ENCODE measurements at regions of chr2 and their contacts with region 1.

Region 1: DNA sequence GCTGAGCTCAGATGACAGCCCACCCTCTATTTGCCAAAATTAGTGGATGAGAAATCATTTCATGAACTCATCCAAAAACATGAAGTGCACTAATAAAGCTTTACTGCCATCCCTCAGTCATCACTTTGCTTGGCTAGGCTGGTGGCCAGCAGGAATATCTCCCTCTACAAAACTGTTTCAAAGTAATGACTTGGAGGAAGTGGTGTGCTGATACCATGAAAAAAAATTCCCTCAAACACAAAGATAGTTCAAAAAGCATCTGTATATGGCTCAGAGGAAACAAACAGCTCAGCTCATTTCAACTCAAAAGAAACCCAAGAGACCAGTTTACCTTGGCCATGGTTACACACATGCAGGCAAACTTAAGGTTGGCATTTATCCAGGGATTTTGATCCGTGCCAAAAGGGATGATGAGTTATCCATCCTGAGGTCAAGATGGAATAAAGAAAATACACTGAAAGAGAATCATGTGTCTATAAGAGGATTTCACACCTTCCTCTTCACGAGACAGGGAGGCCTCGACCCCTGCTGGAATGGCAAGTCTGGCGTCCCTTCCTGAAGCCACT is 18.4 kb upstream of the WIPF1 start:
- DNase-seq: no peak

Region 2: DNA sequence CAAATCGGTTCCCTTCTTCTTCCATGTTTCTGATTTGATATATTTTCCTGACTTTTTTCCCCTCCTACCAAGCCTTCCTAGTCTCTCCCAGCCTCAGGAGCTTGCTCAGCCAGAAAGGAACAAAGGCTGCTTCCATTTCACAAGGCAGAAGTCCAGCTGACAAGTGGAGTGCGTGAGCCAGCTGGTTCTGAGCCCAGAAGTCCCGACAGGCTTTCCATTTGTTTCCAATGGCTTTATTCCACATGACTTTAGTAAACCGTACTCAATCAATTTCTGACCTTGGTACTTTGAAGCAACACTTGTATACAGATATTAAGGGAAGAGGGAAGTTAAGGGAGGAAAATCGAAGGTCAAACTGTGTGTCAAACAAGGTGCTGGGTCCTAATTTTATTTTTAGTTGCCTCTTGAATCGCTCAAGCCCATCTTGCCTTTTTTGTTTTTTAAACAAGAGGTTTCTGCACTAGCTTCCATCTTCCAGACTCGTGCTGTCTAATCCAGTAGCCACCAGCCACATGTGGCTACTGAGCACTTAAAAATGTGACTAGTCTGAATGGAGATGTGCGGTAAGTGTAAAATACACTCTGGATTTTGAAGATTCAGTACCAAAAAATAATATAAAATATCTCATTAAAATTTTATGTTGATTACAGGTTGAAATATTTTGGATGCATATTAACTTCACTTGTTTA is 54.5 kb before region 1 on chr2:
- intact Hi-C with region 1: no loop called
- DNase-seq: peak; percentile 88

Region 3: DNA sequence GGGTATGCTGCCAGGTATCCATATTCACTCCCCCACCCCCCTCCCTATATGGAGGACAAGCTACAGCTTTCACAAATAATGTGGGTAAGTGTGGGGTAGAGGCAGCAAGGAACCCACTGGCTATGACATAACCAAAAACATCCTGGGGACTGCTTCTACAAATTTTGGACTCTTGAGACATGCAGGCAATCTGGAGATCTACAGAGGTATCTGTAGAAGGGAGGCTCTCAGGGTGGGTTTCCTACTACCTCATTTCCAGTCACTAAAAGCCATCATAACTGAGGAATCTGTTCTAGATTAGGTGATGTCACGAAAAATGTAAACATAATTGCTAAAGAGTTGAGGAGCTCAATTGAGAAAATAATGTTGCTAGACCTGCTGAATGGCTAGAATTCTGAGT is 28.4 kb after region 1 on chr2:
- intact Hi-C with region 1: no loop called
- DNase-seq: no peak

Region 4: GRCh38 chr2:174682578-174683391 is 66.8 kb after region 1 on chr2:
- intact Hi-C with region 1: loop called in 1 of 2 experiments (anchors 10 kb)
- DNase-seq: peak; percentile 91

Measured in posterior vena cava (tissue), 2 donors.